ENCODE measurements at regions of chr1 and their contacts with region 1.

Region 1: GRCh38 chr1:184982002-184982954 is 8.0 kb upstream of the NIBAN1 start:
- DNase-seq: peak; percentile 62 to 78
- H3K4me3 ChIP-seq: no peak overlapping the region
- H3K4me3 Mint-ChIP-seq: no peak overlapping the region
- H3K27ac Mint-ChIP-seq: no peak overlapping the region
- H3K4me1 ChIP-seq: no peaks in the 10 kb centered on the region
- H3K4me1 Mint-ChIP-seq: no peaks in the 10 kb centered on the region
- H3K27me3 ChIP-seq: peaks cover 2% of the 10 kb centered on the region; the same call in 1 of the 2 replicates
- H3K27me3 Mint-ChIP-seq: peaks cover 9% of the 10 kb centered on the region
- CTCF ChIP-seq: peak; percentile 77 to 89

Region 2: DNA sequence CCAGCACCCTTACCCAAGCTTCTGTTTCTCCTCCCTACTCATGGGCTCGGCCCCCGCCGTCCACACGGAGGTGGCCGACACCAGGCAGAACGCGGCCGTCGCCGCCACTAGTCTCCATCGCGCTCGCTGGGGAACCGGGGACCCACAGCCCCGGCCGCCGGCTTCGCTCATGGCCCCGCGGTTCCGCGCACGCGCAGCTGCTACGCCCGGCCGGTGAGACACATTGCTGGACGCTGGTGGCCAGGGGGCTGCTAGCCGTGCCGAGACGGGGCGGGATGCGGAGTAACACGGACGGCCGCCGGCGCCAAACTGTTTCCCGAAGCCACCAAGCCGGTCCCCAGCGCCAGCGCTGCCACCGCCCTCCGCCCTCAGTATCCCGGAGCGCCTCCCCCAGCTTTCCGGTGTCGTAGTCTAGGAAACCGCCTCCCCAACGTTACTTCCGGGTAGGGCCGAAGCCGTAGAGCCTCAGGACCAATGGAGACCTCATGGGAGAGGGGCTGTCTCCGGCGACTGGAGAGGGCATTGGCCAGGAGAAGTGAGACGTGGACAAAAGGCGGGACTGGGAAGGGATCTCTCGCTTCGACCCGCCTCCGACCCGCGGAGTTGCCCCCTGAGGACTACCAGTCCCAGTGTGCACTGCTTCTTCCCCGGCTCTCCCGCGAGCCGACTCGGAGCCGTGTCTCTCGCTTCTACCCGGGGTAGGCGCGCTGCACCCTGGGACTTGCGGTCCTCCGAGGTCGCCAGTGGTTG is 227.6 kb before region 1 on chr1 and contains the start of gene EDEM3:
- CTCF ChIA-PET with region 1: no interaction called
- POLR2A ChIA-PET with region 1: interaction called, 3 read pairs
- intact Hi-C with region 1: loop called (anchors 5 kb)
- DNase-seq: peak; percentile 98 to 99
- H3K4me3 ChIP-seq: peak within 1 kb of the TSS; percentile 82
- H3K4me3 Mint-ChIP-seq: peak within 1 kb of the TSS; percentile 98
- H3K27ac Mint-ChIP-seq: peak within 1 kb of the TSS; percentile 90
- H3K4me1 ChIP-seq: peaks cover 14% of the 10 kb centered on the region
- H3K4me1 Mint-ChIP-seq: peaks cover 25% of the 10 kb centered on the region
- H3K27me3 ChIP-seq: no peaks in the 10 kb centered on the region
- H3K27me3 Mint-ChIP-seq: no peaks in the 10 kb centered on the region
- CTCF ChIP-seq: no peak
- total RNA-seq, gene EDEM3: 13.7 and 14.1 TPM in 2 replicates

Region 3: GRCh38 chr1:185170291-185170848 is 188.1 kb after region 1 on chr1:
- CTCF ChIA-PET with region 1: interaction called, 6 read pairs
- POLR2A ChIA-PET with region 1: no interaction called
- intact Hi-C with region 1: loop called (anchors 1 kb)
- DNase-seq: peak; percentile 55 to 71
- H3K4me3 ChIP-seq: no peak overlapping the region
- H3K4me3 Mint-ChIP-seq: peak overlapping the region; percentile 49
- H3K27ac Mint-ChIP-seq: no peak overlapping the region
- H3K4me1 ChIP-seq: no peaks in the 10 kb centered on the region
- H3K4me1 Mint-ChIP-seq: peaks cover 15% of the 10 kb centered on the region
- H3K27me3 ChIP-seq: no peaks in the 10 kb centered on the region
- H3K27me3 Mint-ChIP-seq: no peaks in the 10 kb centered on the region
- CTCF ChIP-seq: peak; percentile 75 to 79

Region 4: DNA sequence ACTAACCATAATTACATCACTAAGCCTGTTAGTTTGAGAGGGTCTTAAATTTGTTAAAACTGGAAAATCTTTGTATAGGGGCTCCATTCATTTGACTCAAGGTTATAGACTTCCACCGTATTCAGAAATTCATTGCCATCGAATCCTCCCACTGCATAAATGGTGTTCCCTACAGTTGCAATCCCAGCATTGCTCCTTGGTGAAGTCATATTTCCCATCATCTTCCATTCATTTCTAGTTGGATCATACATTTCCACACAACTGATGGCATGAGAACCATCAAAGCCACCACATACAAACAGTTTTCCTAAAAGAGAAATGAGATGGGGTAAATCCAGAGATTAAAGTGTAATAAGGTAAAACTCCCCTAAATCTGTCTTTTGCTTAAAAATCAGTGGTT is 315.7 kb after region 1 on chr1:
- CTCF ChIA-PET with region 1: no interaction called
- POLR2A ChIA-PET with region 1: no interaction called
- intact Hi-C with region 1: no loop called
- DNase-seq: no peak
- H3K4me3 ChIP-seq: no peak overlapping the region
- H3K4me3 Mint-ChIP-seq: no peak overlapping the region
- H3K27ac Mint-ChIP-seq: no peak overlapping the region
- H3K4me1 ChIP-seq: no peaks in the 10 kb centered on the region
- H3K4me1 Mint-ChIP-seq: no peaks in the 10 kb centered on the region
- H3K27me3 ChIP-seq: no peaks in the 10 kb centered on the region
- H3K27me3 Mint-ChIP-seq: no peaks in the 10 kb centered on the region
- CTCF ChIP-seq: no peak

Measured in Caco-2 (cell line).